Activated CD4-positive, alpha-beta T cell treated with anti-CD3 and anti-CD28 coated beads for 36 hours (primary cell): ENCODE measurements at regions of chr17 and their contacts with region 1.

Region 1: GRCh38 chr17:4709794-4710692 is at the start of gene ARRB2:
- DNase-seq: peak; percentile 99
- ATAC-seq: peak; percentile 83
- H3K4me3 Mint-ChIP-seq: peak within 1 kb of the TSS; percentile 82
- H3K27ac Mint-ChIP-seq: peak within 1 kb of the TSS; percentile 90
- H3K4me1 Mint-ChIP-seq: peaks cover 52% of the 10 kb centered on the region
- H3K27me3 Mint-ChIP-seq: no peaks in the 10 kb centered on the region
- total RNA-seq, gene ARRB2: 168 to 175 TPM

Region 2: GRCh38 chr17:3965118-3965803 is 744.8 kb before region 1 on chr17:
- CTCF ChIA-PET with region 1: no interaction called
- POLR2A ChIA-PET with region 1: no interaction called
- intact Hi-C with region 1: loop called in 1 of 2 experiments (anchors 5 kb)
- DNase-seq: peak; percentile 86
- ATAC-seq: peak; percentile 75
- H3K4me3 Mint-ChIP-seq: peak overlapping the region; percentile 81
- H3K27ac Mint-ChIP-seq: peak overlapping the region; percentile 93
- H3K4me1 Mint-ChIP-seq: peaks cover 40% of the 10 kb centered on the region
- H3K27me3 Mint-ChIP-seq: no peaks in the 10 kb centered on the region

Region 3: GRCh38 chr17:4789901-4790704 is 80.1 kb after region 1 on chr17:
- CTCF ChIA-PET with region 1: interaction called, 4 read pairs
- POLR2A ChIA-PET with region 1: interaction called, 7 read pairs
- intact Hi-C with region 1: loop called (anchors 1 kb)
- DNase-seq: peak; percentile 92
- ATAC-seq: peak; percentile 91
- H3K4me3 Mint-ChIP-seq: peak overlapping the region; percentile 64
- H3K27ac Mint-ChIP-seq: peak overlapping the region; percentile 93
- H3K4me1 Mint-ChIP-seq: peaks cover 25% of the 10 kb centered on the region
- H3K27me3 Mint-ChIP-seq: peaks cover 34% of the 10 kb centered on the region

Region 4: GRCh38 chr17:4806777-4807604 is 96.9 kb after region 1 on chr17 and contains the start of gene PLD2:
- CTCF ChIA-PET with region 1: no interaction called
- POLR2A ChIA-PET with region 1: no interaction called
- intact Hi-C with region 1: loop called in 1 of 2 experiments (anchors 1 kb)
- DNase-seq: peak; percentile 93
- ATAC-seq: peak; percentile 98
- H3K4me3 Mint-ChIP-seq: peak within 1 kb of the TSS; percentile 73
- H3K27ac Mint-ChIP-seq: no peak within 1 kb of the TSS
- H3K4me1 Mint-ChIP-seq: peaks cover 7% of the 10 kb centered on the region
- H3K27me3 Mint-ChIP-seq: no peaks in the 10 kb centered on the region
- total RNA-seq, gene PLD2: 12.3 to 14.1 TPM

Region 5: GRCh38 chr17:4881761-4882555 is 171.9 kb after region 1 on chr17:
- CTCF ChIA-PET with region 1: interaction called, 4 read pairs
- POLR2A ChIA-PET with region 1: interaction called, 3 read pairs
- intact Hi-C with region 1: loop called in 1 of 2 experiments (anchors 1 kb)
- DNase-seq: peak; percentile 84
- ATAC-seq: peak; percentile 94
- H3K4me3 Mint-ChIP-seq: no peak overlapping the region
- H3K27ac Mint-ChIP-seq: no peak overlapping the region
- H3K4me1 Mint-ChIP-seq: no peaks in the 10 kb centered on the region
- H3K27me3 Mint-ChIP-seq: no peaks in the 10 kb centered on the region

Region 6: DNA sequence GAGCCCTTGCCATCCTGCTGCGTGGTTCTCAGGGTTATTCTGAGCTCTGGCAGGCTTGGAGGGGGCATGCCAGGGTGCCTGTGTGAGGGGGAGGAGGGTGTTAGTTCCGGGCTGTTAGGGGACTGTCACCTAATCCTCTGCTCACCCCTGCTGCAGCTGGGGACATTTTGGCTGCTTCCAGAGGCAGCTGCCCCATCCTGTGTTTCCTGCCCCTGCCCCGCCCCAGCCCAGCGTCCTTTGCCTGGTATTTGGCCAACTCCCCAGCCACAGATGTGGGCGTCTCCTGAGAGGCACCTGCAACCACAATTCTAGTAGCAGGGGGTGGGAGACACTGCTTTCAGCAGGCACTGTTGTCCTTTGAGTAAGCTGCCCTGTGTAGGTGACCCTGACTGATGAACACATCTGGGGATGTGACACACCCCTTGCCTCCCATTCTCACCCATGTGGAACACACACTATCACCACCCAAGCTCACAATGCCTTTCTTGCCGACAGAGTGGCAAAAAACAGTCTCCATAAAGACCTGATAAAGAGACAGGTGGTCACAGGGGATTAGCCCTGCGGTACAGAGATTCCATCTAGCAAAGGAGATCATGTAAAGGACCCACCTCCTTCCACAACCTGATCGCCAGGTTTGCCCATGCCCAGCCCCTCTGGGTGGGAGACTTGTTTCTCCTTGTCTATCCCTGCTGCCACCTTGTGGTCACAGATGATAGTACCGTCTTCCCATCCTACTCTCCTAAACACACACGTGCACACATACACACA is 193.2 kb after region 1 on chr17 and contains the start of gene CHRNE:
- CTCF ChIA-PET with region 1: interaction called, 5 read pairs
- POLR2A ChIA-PET with region 1: interaction called, 3 read pairs
- intact Hi-C with region 1: loop called in 1 of 2 experiments (anchors 1 kb)
- DNase-seq: peak; percentile 89
- ATAC-seq: peak; percentile 44
- H3K4me3 Mint-ChIP-seq: peak within 1 kb of the TSS; percentile 65
- H3K27ac Mint-ChIP-seq: peak within 1 kb of the TSS; percentile 72
- H3K4me1 Mint-ChIP-seq: peaks cover 26% of the 10 kb centered on the region
- H3K27me3 Mint-ChIP-seq: no peaks in the 10 kb centered on the region
- total RNA-seq, gene CHRNE: 0.59 to 0.84 TPM

Region 7: GRCh38 chr17:4967539-4968165 is 257.6 kb after region 1 on chr17 and contains the start of gene SPAG7:
- CTCF ChIA-PET with region 1: interaction called, 3 read pairs
- POLR2A ChIA-PET with region 1: interaction called, 3 read pairs
- intact Hi-C with region 1: loop called in 1 of 2 experiments (anchors 1 kb)
- DNase-seq: peak; percentile 96
- ATAC-seq: peak; percentile 54
- H3K4me3 Mint-ChIP-seq: no peak within 1 kb of the TSS
- H3K27ac Mint-ChIP-seq: no peak within 1 kb of the TSS
- H3K4me1 Mint-ChIP-seq: peaks cover 40% of the 10 kb centered on the region
- H3K27me3 Mint-ChIP-seq: no peaks in the 10 kb centered on the region
- total RNA-seq, gene SPAG7: 61.4 to 69.4 TPM